ENCODE measurements at regions of chr6 and their contacts with region 1.

Region 1: GRCh38 chr6:24699521-24700359 is 19.2 kb downstream of the C6orf62 start:
- DNase-seq: no peak
- H3K4me3 ChIP-seq: no peak overlapping the region
- H3K27ac ChIP-seq: no peak overlapping the region
- H3K4me1 ChIP-seq: no peaks in the 10 kb centered on the region
- H3K27me3 ChIP-seq: no peaks in the 10 kb centered on the region
- CTCF ChIP-seq: no peak

Region 2: GRCh38 chr6:24431045-24431451 is 268.7 kb before region 1 on chr6:
- CTCF ChIA-PET with region 1: no interaction called
- POLR2A ChIA-PET with region 1: no interaction called
- intact Hi-C with region 1: loop called (anchors 5 kb)
- DNase-seq: peak; percentile 63
- H3K4me3 ChIP-seq: no peak overlapping the region
- H3K27ac ChIP-seq: no peak overlapping the region
- H3K4me1 ChIP-seq: no peaks in the 10 kb centered on the region
- H3K27me3 ChIP-seq: no peaks in the 10 kb centered on the region
- CTCF ChIP-seq: peak; percentile 80

Region 3: DNA sequence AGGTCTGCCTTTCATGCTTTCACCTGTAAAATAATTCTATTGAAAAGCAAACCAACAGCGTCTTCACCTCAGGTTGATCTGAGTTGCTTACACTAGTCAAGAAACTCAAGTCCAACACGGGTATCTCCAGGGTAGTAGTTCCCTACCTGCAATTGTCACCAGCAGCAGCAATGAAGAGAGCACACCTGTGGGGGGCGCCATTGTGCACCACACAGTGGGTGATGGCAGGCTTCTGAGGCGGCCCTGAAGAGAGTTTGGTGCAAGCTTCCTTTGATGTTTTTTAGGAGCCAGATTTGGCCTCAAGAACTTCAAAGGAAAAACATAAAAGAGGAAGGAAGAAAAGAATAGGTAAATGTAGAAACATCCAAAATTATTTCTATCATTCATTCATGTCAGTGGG is 98.8 kb before region 1 on chr6:
- CTCF ChIA-PET with region 1: no interaction called
- POLR2A ChIA-PET with region 1: interaction called, 18 read pairs
- intact Hi-C with region 1: no loop called
- DNase-seq: no peak
- H3K4me3 ChIP-seq: no peak overlapping the region
- H3K27ac ChIP-seq: no peak overlapping the region
- H3K4me1 ChIP-seq: no peaks in the 10 kb centered on the region
- H3K27me3 ChIP-seq: no peaks in the 10 kb centered on the region
- CTCF ChIP-seq: peak; percentile 46